K562 (cell line): ENCODE measurements at regions of chr14 and their contacts with region 1.

Region 1: GRCh38 chr14:103984196-103984595 is 41.9 kb upstream of the RD3L start:
- DNase-seq: no peak
- ATAC-seq: no peak
- H3K4me3 ChIP-seq: no peak overlapping the region
- H3K27ac ChIP-seq: no peak overlapping the region
- H3K4me1 ChIP-seq: no peaks in the 10 kb centered on the region
- H3K27me3 ChIP-seq: peaks cover 0 to 7% of the 10 kb centered on the region in 2 experiments; a peak in 1 of 5 replicates
- CTCF ChIP-seq: no peak
- EP300 ChIP-seq: no peak
- POLR2A ChIP-seq: no peak
- RAD21 ChIP-seq: no peak

Region 2: DNA sequence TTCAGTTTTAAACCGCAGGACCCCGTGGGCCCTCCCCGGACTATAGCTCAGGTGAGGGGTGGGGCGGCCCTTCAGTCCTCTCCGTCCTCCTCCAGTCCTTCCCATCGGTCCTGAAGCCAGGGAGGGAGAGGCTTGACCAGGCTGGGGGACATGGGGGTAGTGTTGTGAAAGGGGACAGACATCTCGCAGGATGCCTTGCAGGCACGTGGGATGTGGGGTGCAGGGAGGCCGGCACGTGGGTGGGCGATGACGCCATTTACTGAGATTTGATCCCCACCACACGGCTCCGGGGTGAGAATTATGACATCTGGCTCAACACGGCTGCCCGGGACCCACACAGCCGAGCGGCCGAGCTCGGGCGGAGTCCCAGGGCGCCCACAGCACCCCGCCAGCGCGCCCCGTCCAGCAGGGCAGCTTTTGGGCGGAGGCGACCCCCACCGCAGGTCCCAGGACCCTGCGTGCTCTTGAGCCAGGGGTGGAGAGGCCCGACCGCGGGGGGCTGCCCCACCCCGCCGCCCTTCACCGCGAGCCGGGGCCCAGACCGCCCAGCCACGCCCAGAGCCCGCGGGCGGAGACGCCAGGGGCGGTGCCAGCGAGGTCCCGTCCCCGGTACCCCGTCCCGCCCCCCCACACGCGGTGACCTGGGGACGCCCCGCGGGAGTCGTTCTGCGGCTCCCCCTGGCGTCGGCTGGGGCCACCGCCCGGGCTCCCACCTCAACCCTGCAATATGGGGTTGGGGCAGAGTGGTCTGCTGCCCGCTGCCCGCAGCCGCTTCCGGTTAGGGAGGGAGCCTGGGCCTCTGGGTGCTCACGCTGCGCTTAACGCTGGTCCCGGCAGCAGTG is 892.9 kb before region 1 on chr14:
- CTCF ChIA-PET with region 1: no interaction called
- POLR2A ChIA-PET with region 1: no interaction called
- in situ Hi-C with region 1: no loop called
- intact Hi-C with region 1: no loop called
- DNase-seq: peak; percentile 81 to 95 (median 92)
- ATAC-seq: peak; percentile 92
- H3K4me3 ChIP-seq: peak overlapping the region; percentile 35
- H3K27ac ChIP-seq: peak overlapping the region; percentile 56
- H3K4me1 ChIP-seq: peaks cover 8 to 73% of the 10 kb centered on the region in 2 experiments; a peak in 4 of 5 replicates
- H3K27me3 ChIP-seq: no peaks in the 10 kb centered on the region
- CTCF ChIP-seq: peak; percentile 56 to 67 (median 58); a peak in 5 of 6 replicates
- EP300 ChIP-seq: no peak
- POLR2A ChIP-seq: no peak
- RAD21 ChIP-seq: peak in 1 of 2 experiments; percentile 35; a peak in 2 of 4 replicates

Region 3: GRCh38 chr14:103808403-103809001 is 175.7 kb before region 1 on chr14:
- CTCF ChIA-PET with region 1: interaction called, 4 read pairs
- POLR2A ChIA-PET with region 1: no interaction called
- in situ Hi-C with region 1: loop called (anchors 5 kb)
- intact Hi-C with region 1: loop called (anchors 1 kb)
- DNase-seq: peak; percentile 53 to 77 (median 55)
- ATAC-seq: peak; percentile 97
- H3K4me3 ChIP-seq: no peak overlapping the region
- H3K27ac ChIP-seq: no peak overlapping the region
- H3K4me1 ChIP-seq: no peaks in the 10 kb centered on the region
- H3K27me3 ChIP-seq: peaks cover 0 to 3% of the 10 kb centered on the region in 2 experiments; a peak in 1 of 5 replicates
- CTCF ChIP-seq: peak; percentile 69 to 80 (median 72)
- EP300 ChIP-seq: no peak
- POLR2A ChIP-seq: no peak
- RAD21 ChIP-seq: peak; percentile 75 to 87

Region 4: DNA sequence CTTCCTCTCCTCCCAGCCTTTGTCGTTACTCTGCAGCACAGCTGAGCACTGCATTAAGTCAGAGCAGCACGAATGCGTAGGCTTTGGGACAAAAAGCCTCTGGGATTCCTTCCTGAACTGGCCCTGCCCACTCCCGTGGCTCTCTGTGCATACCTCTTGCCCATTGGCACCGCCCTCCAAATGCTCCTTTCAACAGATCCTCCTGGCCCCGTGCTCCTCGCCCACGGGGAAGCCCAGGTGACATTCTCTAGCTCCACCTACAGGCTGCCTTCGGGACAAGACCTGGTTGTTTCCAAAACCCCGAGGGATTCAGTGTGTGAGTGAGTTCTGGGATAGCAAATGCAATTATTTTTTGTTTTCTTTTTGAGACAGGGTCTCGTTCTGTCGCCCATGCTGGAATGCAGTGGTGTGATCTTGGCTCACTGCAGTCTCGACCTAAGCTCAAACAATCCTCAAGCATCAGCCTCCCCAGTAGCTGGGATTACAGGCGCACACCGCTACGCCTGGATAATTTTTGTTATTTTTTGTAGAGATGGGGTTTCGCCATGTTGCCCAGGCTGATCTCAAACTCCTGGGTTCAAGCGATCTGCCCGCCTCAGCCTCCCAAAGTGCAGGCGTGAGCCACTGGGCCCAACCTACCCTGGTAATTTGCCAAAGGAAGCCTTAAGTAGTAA is 73.8 kb before region 1 on chr14:
- CTCF ChIA-PET with region 1: no interaction called
- POLR2A ChIA-PET with region 1: no interaction called
- in situ Hi-C with region 1: no loop called
- intact Hi-C with region 1: loop called (anchors 1 kb)
- DNase-seq: peak; percentile 31 to 58 (median 47)
- ATAC-seq: peak; percentile 93
- H3K4me3 ChIP-seq: no peak overlapping the region
- H3K27ac ChIP-seq: no peak overlapping the region
- H3K4me1 ChIP-seq: peaks cover 0 to 5% of the 10 kb centered on the region in 2 experiments; a peak in 2 of 5 replicates
- H3K27me3 ChIP-seq: no peaks in the 10 kb centered on the region
- CTCF ChIP-seq: peak; percentile 62 to 73 (median 64)
- EP300 ChIP-seq: no peak
- POLR2A ChIP-seq: no peak
- RAD21 ChIP-seq: peak in 1 of 2 experiments; percentile 46; a peak in 2 of 4 replicates

Region 5: DNA sequence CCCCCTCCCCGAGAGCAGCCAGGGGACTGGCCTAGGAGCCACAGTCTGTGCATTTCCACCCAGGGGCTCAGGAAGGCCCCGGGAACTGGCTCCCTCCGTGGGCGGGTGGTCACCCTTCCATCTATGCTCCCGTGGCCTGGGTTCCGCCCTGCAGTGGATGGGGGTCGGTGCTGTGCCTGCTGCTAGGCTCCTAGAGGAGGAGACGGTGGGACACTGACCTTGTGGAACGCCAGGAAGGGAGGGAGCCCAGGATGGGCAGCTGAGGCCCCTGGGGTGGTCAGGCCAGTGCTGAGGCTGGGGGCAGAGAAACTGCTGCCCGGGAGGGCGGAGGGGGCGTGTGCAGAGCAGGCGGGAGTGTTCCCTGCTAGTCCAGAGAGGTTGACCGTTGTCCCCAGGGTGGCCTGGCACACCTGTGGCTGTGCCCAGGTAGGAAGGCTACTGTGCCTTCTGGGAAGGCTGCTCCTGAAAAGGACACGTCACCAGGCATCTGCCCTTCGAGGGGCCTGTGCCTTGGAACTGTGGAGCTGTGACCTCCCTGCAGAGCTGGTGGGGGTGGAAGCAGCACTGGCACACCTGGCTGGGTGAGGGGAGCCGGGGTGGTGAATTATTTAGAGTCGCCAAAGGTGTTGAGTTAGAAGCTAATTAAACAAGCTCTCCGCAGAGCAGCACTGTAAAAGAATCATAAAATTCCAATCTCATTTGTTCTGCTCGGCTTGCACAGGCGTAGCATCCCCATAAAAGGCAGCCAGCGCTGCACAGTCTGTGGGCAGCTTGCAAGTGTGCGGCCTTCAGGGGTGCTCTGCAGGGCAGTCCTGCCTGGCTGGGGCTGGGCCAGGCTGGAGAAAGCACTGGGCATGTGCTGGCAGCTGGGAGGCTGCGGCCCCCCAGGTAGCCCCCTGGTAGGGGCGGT is 299.3 kb after region 1 on chr14:
- CTCF ChIA-PET with region 1: no interaction called
- POLR2A ChIA-PET with region 1: no interaction called
- in situ Hi-C with region 1: no loop called
- intact Hi-C with region 1: no loop called
- DNase-seq: no peak
- ATAC-seq: no peak
- H3K4me3 ChIP-seq: no peak overlapping the region
- H3K27ac ChIP-seq: no peak overlapping the region
- H3K4me1 ChIP-seq: no peaks in the 10 kb centered on the region
- H3K27me3 ChIP-seq: peaks cover 0 to 9% of the 10 kb centered on the region in 2 experiments; a peak in 2 of 5 replicates
- CTCF ChIP-seq: no peak
- EP300 ChIP-seq: no peak
- POLR2A ChIP-seq: no peak
- RAD21 ChIP-seq: no peak

Region 6: DNA sequence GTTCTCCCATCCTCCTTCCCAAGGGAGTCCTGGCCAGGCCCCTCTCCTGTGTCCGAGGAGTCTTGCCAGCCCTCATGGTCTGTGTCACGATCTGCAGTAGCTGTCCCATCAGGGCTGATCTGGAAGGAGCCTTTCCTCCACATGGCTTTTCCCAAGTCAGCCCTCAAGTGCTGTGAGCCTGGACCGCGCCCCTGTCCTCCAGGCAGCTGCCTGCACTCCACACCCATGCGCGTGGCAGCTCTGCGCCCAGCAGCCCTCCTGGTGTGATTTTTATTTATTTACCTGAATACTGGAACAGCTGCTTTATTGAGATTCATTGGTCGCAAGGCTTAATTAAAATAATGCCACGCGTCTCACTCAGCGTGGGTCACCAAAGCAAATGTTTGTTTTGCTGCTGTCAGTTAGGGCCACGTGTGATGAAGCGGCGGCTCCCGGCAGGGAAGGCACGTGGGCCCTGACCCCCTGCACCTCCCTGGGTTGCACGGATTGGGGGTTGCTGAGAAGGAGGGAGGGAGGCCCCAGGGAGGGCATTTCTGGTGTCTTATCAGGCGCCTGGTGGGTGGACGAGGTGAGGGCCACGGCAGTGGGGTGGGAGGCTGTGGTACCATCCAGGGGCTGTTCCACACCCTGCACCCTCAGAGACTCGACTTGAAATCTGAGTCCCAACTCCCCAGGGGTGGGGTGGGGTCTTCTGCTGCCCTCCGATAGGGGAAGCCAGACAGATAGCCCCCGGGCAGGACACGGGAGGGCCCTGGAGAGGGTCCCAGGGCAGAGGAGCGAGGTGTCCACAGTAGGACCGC is 389.1 kb after region 1 on chr14:
- CTCF ChIA-PET with region 1: no interaction called
- POLR2A ChIA-PET with region 1: no interaction called
- in situ Hi-C with region 1: no loop called
- intact Hi-C with region 1: no loop called
- DNase-seq: no peak
- ATAC-seq: no peak
- H3K4me3 ChIP-seq: no peak overlapping the region
- H3K27ac ChIP-seq: no peak overlapping the region
- H3K4me1 ChIP-seq: no peaks in the 10 kb centered on the region
- H3K27me3 ChIP-seq: peaks cover 0 to 29% of the 10 kb centered on the region in 2 experiments; a peak in 2 of 5 replicates
- CTCF ChIP-seq: no peak
- EP300 ChIP-seq: no peak
- POLR2A ChIP-seq: no peak
- RAD21 ChIP-seq: no peak